ENCODE measurements at regions of chr10 and their contacts with region 1.

Region 1: GRCh38 chr10:11276449-11276990 is 258.8 kb downstream of the CELF2 start:
- DNase-seq: no peak
- H3K4me3 ChIP-seq: no peak overlapping the region
- H3K27ac ChIP-seq: no peak overlapping the region
- H3K4me1 ChIP-seq: no peaks in the 10 kb centered on the region
- H3K27me3 ChIP-seq: no peaks in the 10 kb centered on the region
- CTCF ChIP-seq: no peak
- EP300 ChIP-seq: no peak
- POLR2A ChIP-seq: no peak

Region 2: DNA sequence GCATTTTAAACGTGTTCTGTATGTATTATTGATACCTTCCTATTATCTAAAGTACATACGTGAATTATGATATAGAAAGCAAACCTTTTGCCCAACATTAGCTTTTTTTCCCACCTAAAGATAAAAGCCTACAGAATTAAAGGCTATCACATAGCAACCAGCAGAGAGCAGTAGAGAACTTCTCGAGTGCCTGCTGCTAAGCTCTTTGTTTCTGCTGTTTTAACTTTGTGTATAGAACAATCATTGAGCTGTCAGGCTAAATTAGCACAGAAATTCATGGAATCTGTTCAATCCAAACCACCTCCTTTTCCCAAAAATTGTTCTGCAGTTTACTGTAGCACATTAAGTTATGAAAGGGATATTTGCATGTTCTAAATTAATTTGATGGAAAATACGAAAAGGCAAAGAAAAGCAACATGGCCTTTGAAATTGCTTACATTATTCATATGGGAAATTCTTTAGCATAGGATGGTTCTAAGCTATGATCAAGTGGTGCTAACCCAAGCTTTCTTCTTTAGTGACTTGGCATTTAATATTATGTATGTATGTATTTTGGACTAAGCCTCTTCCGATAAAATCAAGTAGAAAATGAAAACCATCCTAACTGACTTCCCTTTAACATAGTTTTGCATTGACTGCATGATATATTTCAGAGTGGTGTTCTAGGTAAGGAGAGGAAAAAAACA is 1933.5 kb before region 1 on chr10:
- intact Hi-C with region 1: loop called (anchors 5 kb)
- DNase-seq: no peak
- H3K4me3 ChIP-seq: no peak overlapping the region
- H3K27ac ChIP-seq: no peak overlapping the region
- H3K4me1 ChIP-seq: peaks cover 0 to 14% (median 6%) of the 10 kb centered on the region in 4 donors
- H3K27me3 ChIP-seq: no peaks in the 10 kb centered on the region
- CTCF ChIP-seq: peak; percentile 69 to 81 (median 75)
- EP300 ChIP-seq: no peak
- POLR2A ChIP-seq: no peak

Region 3: DNA sequence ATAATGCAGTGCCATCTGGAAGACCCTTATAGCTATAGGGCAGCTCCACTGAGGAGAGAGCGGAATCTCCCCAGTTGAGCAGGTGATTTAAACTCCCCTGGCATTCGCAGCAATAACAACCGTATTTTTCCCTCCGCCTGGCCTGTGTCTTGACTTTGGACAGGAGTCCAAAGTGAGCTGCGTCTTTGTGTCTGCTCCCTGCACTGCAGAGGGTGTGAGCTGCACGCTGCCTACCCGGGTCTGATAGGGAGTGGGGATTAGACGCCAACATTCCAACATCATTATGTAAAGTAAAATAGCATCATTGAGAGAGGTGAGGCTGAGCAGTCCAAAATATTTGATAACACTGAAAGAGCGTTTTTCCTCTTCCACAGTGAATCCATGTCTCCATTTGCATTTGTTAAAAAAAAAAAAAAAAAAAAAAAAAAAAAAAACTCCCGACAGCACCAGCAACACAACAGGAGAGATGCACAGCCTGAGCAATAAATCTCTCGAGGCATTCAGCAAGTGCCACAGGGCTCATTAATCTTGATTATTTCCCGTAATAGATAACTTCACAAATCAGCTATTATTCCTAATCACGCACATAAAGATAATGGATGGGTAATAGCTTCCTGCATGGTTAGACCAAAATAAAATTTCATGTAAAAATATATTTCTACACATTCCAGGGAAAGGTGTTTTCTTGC is 190.2 kb before region 1 on chr10:
- intact Hi-C with region 1: no loop called
- DNase-seq: no peak
- H3K4me3 ChIP-seq: no peak overlapping the region
- H3K27ac ChIP-seq: peak overlapping the region in 1 of 4 donors; percentile 2
- H3K4me1 ChIP-seq: peaks cover 29 to 39% (median 35%) of the 10 kb centered on the region in 4 donors
- H3K27me3 ChIP-seq: no peaks in the 10 kb centered on the region
- CTCF ChIP-seq: no peak
- EP300 ChIP-seq: no peak
- POLR2A ChIP-seq: no peak

Region 4: GRCh38 chr10:11218395-11218794 is 58.1 kb before region 1 on chr10:
- intact Hi-C with region 1: no loop called
- DNase-seq: no peak
- H3K4me3 ChIP-seq: no peak overlapping the region
- H3K27ac ChIP-seq: no peak overlapping the region
- H3K4me1 ChIP-seq: peaks cover 0 to 21% (median 20%) of the 10 kb centered on the region in 4 donors
- H3K27me3 ChIP-seq: no peaks in the 10 kb centered on the region
- CTCF ChIP-seq: no peak
- EP300 ChIP-seq: no peak
- POLR2A ChIP-seq: no peak